Psoas muscle (tissue), 8 donors: ENCODE measurements at regions of chr12 and their contacts with region 1.

Region 1: DNA sequence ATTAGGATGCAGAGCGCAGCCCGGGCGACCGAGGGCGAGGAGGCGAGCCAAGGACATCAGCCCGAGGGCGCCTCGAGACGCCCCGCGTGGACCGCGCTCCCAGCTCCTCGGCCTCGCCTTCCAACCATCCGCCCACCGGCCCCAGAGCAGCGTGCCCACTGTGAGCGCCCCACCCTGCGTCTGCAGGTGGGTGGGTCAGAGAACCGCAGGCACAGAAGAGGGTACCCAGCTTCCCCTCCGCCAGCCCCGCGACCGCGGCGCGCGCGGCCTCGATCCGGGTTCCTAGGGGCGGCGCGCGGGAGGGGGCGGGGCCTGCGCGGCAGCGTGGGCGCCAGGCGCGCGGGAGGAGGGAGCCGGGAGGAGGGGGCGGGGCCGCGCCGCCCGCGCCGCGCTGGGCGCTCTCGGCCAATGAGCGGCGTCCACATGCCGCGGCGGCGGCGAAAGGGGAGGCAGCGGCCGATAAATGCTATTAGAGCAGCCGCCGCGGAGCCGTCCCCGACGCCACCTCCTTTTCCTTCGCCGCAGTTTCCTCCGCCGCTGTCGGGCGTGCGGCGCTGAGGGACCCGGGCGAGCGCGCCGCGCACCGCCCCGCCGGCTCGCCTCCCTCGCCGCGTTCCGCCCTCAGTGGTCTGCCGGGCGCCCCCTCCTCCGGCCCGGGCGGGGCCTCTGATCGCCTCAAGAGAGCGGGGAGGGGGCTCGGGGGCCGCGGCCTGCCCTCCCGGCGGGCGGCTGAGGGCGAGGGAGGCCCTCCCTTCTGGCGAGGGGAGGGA is at the start of gene ATP2A2:
- DNase-seq: peak; percentile 90 to 95
- ATAC-seq: peak; percentile 84 to 90 (median 85)
- H3K4me3 ChIP-seq: peak within 1 kb of the TSS; percentile 96
- H3K27ac ChIP-seq: peak within 1 kb of the TSS; percentile 96
- H3K4me1 ChIP-seq: peaks cover 22% of the 10 kb centered on the region
- H3K27me3 ChIP-seq: no peaks in the 10 kb centered on the region
- CTCF ChIP-seq: no peak
- total RNA-seq, gene ATP2A2: 1,152 to 2,814 (median 1,810) TPM

Region 2: DNA sequence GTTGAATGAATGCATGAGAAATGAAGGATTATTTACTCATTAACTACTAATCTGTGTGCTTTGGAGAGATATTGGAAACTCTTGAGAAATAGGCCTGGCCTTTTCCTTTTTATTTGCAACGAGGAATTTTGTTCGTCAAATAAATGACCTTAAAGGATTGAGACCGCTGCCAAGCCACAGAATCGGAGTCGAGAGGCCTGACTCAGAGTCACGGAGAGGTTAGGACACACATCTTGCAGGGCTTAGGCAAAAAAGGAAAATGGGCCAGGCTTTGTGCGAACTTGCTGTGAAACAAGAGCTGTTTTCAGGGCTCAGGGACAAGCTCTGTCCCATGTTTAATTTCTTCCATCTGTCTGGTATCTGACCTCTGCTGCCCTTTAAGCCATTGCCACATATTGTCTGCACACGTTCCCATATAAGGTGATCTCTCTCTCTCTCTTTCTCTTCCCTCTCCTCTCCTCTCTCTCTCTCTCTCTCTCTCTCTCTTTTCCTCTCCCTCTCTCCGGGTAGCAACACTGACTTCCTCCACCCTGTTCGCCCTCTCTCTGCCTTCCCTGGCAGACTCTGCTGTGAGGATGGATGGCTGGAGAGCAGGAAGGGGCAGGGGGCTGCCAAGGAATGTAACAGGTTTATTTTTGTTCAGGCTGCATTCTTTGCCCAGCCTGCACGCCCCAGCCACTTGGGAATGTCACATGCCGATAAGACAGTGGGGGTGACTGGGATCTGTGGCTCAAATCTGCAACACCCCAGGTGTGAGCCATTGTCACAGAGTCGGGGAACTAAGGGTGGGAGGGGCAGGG is 171.7 kb before region 1 on chr12:
- intact Hi-C with region 1: loop called (anchors 5 to 10 kb)
- DNase-seq: peak; percentile 86 to 88
- ATAC-seq: peak; percentile 91 to 93 (median 92)
- H3K4me3 ChIP-seq: peak overlapping the region; percentile 49
- H3K27ac ChIP-seq: peak overlapping the region; percentile 81
- H3K4me1 ChIP-seq: peaks cover 25% of the 10 kb centered on the region
- H3K27me3 ChIP-seq: no peaks in the 10 kb centered on the region
- CTCF ChIP-seq: no peak

Region 3: DNA sequence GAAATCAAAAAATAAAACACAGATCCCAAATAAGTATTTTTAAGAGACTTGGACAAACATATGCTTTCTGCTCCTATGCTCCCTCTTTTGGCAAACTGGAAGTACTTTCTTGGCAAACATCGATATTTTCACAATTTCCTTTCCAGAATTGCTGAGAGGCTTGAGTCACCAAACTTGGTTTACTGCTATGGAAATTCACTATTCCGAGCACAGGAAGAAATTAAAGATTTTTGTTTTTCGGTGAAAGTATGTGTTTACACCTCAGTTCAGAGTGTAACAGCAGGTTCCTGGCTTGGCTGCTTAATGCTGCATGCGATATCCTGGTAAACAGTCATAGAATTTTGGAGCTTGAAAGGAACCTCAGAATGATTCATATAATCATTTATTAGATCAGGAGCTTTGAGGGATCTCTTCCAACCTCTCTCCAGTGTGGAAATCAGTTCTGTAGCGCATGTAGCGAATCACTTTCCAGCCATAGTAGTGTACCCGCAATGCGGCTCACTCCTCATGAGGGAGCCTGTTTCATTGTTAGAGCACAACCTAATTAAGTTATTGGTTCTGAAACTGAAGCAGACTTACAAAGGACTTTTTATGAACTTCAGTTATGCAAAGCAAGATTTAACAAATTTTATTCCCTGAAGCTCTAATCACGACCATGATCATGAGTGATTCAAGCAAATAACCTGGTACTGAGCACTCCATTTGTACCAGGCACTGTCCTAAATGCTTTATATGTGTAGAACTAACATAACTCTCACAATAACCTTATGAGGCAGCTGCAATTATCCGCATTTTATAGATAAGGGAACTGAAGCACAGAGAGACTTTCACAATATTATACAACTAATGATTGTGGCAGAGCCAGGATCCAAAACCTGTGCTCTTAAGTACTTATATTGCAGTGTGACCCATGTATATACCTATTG is 56.3 kb before region 1 on chr12:
- intact Hi-C with region 1: loop called in 1 of 2 experiments (anchors 5 kb)
- DNase-seq: no peak
- ATAC-seq: peak; percentile 68 to 79 (median 74)
- H3K4me3 ChIP-seq: peak overlapping the region; percentile 45
- H3K27ac ChIP-seq: peak overlapping the region; percentile 81
- H3K4me1 ChIP-seq: peaks cover 32% of the 10 kb centered on the region
- H3K27me3 ChIP-seq: no peaks in the 10 kb centered on the region
- CTCF ChIP-seq: peak; percentile 54

Region 4: DNA sequence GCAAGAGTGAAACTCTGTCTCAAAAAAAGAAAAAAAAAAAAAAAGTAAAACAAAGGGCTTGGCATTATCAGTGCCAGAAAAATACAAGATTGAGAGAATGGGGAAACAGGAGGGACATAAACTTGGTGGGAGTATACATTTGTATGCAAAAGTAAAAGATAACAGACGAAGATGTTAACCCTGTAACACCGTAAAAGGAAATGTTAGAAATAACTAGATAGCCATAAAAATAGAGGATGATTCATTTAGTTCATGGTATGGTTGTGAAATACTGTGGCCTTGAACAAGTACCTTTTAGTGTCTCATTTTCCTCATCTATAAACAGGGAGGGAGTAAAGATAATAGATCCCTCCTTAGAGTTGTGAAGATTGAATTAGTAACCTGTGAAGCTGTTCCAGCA is 33.3 kb after region 1 on chr12:
- intact Hi-C with region 1: no loop called
- DNase-seq: no peak
- ATAC-seq: peak; percentile 39 to 57 (median 44)
- H3K4me3 ChIP-seq: no peak overlapping the region
- H3K27ac ChIP-seq: peak overlapping the region; percentile 73
- H3K4me1 ChIP-seq: peaks cover 34% of the 10 kb centered on the region
- H3K27me3 ChIP-seq: no peaks in the 10 kb centered on the region
- CTCF ChIP-seq: no peak